Right cardiac atrium (tissue), 5 donors: ENCODE measurements at regions of chr12 and their contacts with region 1.

Region 1: DNA sequence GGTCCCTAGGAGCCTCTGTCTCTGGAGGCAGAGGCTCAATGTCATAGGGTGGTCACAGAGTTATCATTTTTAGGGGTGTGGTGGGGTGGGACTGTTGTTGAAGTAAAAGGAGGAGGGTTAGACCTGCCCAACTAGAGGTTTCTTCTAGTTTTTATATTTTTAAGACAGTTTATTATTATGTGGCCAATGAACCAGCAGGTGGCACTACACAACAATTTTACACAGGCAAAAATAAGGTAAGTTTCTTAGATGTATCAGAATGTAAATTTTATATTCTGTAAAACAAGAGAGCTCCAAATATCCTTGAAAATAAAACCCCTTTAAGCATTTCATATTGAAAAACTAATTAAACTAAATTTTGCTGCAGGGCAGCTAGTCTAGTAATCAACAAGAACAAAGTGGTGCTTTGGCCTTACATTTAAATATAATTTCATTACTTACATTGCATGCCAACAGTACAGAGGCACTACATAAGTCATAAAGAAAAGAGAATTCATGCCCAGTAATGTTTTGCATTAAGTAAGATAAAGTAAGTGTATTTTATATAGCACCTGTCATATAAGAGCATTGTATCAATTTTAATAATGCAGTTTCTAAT is 22.2 kb upstream of the OVCH1 start:
- DNase-seq: no peak
- ATAC-seq: no peak
- H3K4me3 ChIP-seq: no peak overlapping the region
- H3K27ac ChIP-seq: no peak overlapping the region
- H3K4me1 ChIP-seq: no peaks in the 10 kb centered on the region
- H3K27me3 ChIP-seq: no peaks in the 10 kb centered on the region

Region 2: GRCh38 chr12:28955491-28955890 is 564.2 kb before region 1 on chr12:
- intact Hi-C with region 1: no loop called
- DNase-seq: no peak
- ATAC-seq: no peak
- H3K4me3 ChIP-seq: no peak overlapping the region
- H3K27ac ChIP-seq: no peak overlapping the region
- H3K4me1 ChIP-seq: peaks cover 1% of the 10 kb centered on the region
- H3K27me3 ChIP-seq: no peaks in the 10 kb centered on the region

Region 3: DNA sequence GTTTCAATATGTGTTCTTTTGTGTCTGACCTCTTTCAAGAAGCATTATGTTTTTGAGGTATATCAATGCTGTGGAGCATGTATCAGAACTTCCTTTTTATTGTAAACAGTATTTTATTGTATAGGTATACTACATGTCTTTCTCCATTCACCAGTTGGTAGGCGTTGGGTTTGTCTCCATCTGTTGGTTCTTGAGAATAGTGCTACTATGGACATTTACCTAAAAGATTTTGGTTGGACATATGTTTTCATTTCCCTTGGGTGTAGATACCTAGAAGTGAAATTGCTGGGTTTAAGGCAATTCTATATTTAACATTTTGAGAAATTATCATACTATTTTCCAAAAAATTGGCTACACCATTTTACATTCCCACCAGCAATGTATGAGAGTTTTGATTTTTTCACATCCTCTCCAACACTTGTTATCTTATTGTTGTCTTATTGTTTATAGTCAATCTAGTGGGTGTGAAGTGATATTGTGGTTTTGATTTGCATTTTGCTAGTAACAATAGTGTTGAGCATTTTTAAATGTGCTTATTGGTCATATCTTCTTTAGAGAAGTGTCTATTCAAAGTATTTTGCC is 766.8 kb after region 1 on chr12:
- intact Hi-C with region 1: loop called in 1 of 4 experiments (anchors 10 kb)
- DNase-seq: no peak
- ATAC-seq: no peak
- H3K4me3 ChIP-seq: no peak overlapping the region
- H3K27ac ChIP-seq: no peak overlapping the region
- H3K4me1 ChIP-seq: no peaks in the 10 kb centered on the region
- H3K27me3 ChIP-seq: no peaks in the 10 kb centered on the region

Region 4: GRCh38 chr12:30806989-30807694 is 1287.5 kb after region 1 on chr12:
- intact Hi-C with region 1: loop called in 1 of 4 experiments (anchors 5 kb)
- DNase-seq: peak in 1 of 3 donors; percentile 52
- ATAC-seq: peak; percentile 94 to 96
- H3K4me3 ChIP-seq: no peak overlapping the region
- H3K27ac ChIP-seq: no peak overlapping the region
- H3K4me1 ChIP-seq: peaks cover 2% of the 10 kb centered on the region
- H3K27me3 ChIP-seq: no peaks in the 10 kb centered on the region